GM18951 (cell line): ENCODE measurements at regions of chr20 and their contacts with region 1.

Region 1: DNA sequence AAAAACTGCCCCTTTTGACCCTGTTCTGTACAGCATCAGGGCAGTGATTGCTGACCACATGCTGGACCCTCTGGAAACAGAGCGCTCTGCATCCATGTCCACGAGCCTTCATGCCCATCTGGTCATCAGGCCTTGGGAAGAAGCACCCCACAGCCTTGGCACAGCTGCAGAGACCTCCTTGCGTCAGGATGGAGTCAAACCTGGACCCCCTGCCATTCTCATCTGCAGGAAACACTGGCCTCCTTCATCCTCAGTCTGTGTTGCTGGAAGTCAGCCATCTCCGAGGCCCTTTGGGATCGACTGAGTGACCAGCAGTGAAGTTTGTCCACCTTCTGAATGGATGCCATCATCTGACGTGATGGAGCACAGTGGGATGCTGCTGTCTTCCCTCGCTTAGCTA is 2138.3 kb upstream of the DEFB115 start:
- POLR2A ChIP-seq: no peak

Region 2: GRCh38 chr20:29326376-29327070 is 207.4 kb after region 1 on chr20:
- in situ Hi-C with region 1: no loop called
- POLR2A ChIP-seq: no peak

Region 3: GRCh38 chr20:29873946-29874345 is 754.8 kb after region 1 on chr20:
- in situ Hi-C with region 1: loop called (anchors 10 kb)
- POLR2A ChIP-seq: no peak

Region 4: GRCh38 chr20:30419466-30419865 is 1300.3 kb after region 1 on chr20:
- in situ Hi-C with region 1: loop called (anchors 5 kb)
- POLR2A ChIP-seq: no peak